ENCODE measurements at regions of chr1 and their contacts with region 1.

Region 1: GRCh38 chr1:9234223-9235095 is at the start of gene H6PD:
- DNase-seq: peak; percentile 74
- H3K4me3 ChIP-seq: peak within 1 kb of the TSS; percentile 58 to 82 (median 66)
- H3K27ac ChIP-seq: peak within 1 kb of the TSS; percentile 75
- H3K4me1 ChIP-seq: peaks cover 21% of the 10 kb centered on the region
- H3K27me3 ChIP-seq: no peaks in the 10 kb centered on the region
- CTCF ChIP-seq: peak; percentile 68 to 76
- POLR2A ChIP-seq: peak; percentile 96
- total RNA-seq, gene H6PD: 29.0 and 40.1 TPM in 2 replicates

Region 2: GRCh38 chr1:9128520-9129265 is 105.8 kb before region 1 on chr1 and contains the start of gene GPR157:
- CTCF ChIA-PET with region 1: interaction called, 4 read pairs
- POLR2A ChIA-PET with region 1: interaction called, 3 read pairs
- dilution Hi-C with region 1: no loop called
- intact Hi-C with region 1: loop called (anchors 5 kb)
- DNase-seq: peak; percentile 70
- H3K4me3 ChIP-seq: peak within 1 kb of the TSS; percentile 34 to 49 (median 36)
- H3K27ac ChIP-seq: no peak within 1 kb of the TSS
- H3K4me1 ChIP-seq: peaks cover 8% of the 10 kb centered on the region
- H3K27me3 ChIP-seq: no peaks in the 10 kb centered on the region
- CTCF ChIP-seq: peak in 1 of 2 donors; percentile 19
- POLR2A ChIP-seq: peak; percentile 78
- total RNA-seq, gene GPR157: 5.2 and 6.5 TPM in 2 replicates

Region 3: DNA sequence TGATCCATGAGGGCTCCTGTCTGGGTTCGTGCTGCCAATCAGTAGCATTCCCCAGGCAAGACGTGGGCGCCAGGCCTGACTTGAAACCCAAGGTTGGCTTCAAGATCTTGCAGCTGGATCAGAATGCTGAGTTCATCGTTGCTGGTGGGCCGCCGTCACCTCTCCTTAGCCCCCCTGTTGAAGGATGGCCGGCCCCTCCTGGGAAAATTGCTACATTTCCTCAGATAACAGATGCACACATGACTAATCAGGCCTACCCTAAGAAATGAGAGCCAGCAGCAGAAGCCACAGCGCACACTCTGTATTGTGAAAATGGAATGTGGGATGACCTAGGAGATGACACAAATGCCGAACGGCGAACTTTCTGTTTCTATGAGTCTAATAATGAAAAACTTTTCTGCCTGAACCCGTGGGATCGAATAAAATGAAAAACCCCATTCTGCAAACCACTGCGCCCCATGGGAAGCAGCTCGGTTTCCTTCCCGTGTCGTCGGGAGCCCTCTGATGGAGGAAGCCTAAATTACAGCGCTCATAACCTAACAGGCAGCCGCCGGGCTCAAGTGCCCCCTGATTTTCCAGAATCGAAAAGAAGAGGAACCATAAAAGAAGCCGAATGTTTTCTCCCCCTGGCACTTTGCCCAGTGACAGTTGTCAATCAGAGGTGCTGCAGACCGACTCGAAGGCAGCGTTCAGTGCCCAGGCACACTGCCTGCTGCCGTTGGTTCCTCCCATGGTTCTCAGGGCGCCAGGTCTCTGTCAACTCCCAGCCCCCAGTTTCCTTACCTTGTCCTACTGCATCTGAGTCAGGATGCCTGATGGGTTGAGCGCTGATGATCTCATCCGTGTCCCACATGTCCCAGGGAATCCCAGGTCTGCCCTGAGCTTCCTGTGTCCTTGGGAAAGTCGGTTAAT is 38.1 kb before region 1 on chr1:
- CTCF ChIA-PET with region 1: interaction called, 29 read pairs
- POLR2A ChIA-PET with region 1: no interaction called
- dilution Hi-C with region 1: no loop called
- intact Hi-C with region 1: loop called (anchors 5 kb)
- DNase-seq: peak; percentile 66
- H3K4me3 ChIP-seq: no peak overlapping the region
- H3K27ac ChIP-seq: no peak overlapping the region
- H3K4me1 ChIP-seq: peaks cover 14% of the 10 kb centered on the region
- H3K27me3 ChIP-seq: peaks cover 2 to 5% of the 10 kb centered on the region in 2 experiments
- CTCF ChIP-seq: peak; percentile 74 to 75
- POLR2A ChIP-seq: no peak

Region 4: DNA sequence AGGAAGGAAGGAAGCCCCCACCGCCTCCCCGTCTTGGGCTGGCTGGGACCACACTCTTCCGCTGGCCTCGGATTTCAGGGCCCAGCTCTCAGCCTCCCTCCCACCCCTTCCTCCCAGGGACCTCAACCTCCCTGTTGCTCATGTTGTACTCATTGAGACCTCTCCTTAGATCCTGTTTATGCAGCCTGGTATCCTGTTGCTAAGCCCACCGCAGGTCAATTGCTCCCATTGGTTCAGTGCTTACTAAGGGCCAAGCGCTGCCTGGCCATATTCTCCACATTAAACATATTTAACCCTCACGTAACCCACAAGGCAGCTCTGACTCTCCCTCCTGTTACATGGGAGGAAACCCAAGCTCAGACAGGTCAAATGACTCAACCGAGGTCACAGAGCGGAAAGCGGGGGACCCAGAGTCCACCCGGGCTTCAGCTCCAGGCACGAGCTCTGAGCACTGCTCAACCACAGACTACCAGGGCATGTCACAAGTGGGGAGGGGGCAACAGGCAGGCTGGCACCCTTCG is 23.1 kb before region 1 on chr1:
- CTCF ChIA-PET with region 1: interaction called, 13 read pairs
- POLR2A ChIA-PET with region 1: no interaction called
- dilution Hi-C with region 1: no loop called
- intact Hi-C with region 1: no loop called
- DNase-seq: peak; percentile 95
- H3K4me3 ChIP-seq: no peak overlapping the region
- H3K27ac ChIP-seq: peak overlapping the region; percentile 73
- H3K4me1 ChIP-seq: peaks cover 16% of the 10 kb centered on the region
- H3K27me3 ChIP-seq: peaks cover 0 to 2% of the 10 kb centered on the region in 2 experiments
- CTCF ChIP-seq: no peak
- POLR2A ChIP-seq: no peak

Region 5: DNA sequence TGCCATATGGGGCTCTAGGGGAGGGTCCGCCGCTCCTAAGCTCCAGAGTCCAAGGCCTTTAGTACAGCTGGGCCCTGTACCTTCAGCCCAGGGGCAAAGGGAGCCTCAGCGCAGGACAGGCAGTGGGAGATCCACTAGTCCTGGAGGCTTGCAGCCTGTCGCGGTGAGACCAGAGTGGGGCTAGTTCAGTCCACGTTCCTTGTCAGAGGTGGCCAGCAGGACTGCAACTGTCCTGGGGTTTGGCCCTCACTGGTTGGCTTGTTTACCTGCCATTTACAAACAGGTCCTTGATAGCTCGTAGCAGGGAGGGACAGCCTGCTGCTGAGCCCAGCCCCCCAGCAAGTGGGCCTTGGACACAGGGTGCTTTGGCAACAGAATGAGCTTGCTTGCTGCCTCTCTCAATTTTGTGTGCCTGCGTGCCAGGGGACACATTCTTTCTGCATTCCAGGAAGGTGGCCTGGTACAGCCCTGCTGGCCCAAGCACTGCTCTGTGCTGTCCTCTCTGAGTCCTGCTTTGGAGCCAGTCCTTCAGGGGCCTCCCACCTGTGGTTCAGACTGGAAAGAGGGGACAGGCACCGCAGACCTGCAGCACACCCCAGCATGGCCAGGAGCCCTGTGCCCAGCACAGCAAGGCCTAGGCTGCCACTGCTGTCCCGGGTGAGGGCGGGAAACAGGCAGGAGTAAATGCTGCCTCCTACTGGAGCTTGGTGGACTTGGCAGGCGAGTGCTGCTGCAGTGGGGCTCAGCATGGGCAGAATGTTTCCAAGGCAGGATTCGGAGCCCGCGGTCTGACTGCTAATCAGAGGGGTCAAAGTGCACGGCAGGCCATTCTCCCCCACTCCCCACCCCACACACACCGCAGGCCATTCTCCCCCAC is 15.3 kb after region 1 on chr1:
- CTCF ChIA-PET with region 1: interaction called, 27 read pairs
- POLR2A ChIA-PET with region 1: no interaction called
- dilution Hi-C with region 1: no loop called
- intact Hi-C with region 1: no loop called
- DNase-seq: peak; percentile 41
- H3K4me3 ChIP-seq: no peak overlapping the region
- H3K27ac ChIP-seq: no peak overlapping the region
- H3K4me1 ChIP-seq: no peaks in the 10 kb centered on the region
- H3K27me3 ChIP-seq: no peaks in the 10 kb centered on the region
- CTCF ChIP-seq: peak; percentile 61 to 77
- POLR2A ChIP-seq: no peak

Region 6: DNA sequence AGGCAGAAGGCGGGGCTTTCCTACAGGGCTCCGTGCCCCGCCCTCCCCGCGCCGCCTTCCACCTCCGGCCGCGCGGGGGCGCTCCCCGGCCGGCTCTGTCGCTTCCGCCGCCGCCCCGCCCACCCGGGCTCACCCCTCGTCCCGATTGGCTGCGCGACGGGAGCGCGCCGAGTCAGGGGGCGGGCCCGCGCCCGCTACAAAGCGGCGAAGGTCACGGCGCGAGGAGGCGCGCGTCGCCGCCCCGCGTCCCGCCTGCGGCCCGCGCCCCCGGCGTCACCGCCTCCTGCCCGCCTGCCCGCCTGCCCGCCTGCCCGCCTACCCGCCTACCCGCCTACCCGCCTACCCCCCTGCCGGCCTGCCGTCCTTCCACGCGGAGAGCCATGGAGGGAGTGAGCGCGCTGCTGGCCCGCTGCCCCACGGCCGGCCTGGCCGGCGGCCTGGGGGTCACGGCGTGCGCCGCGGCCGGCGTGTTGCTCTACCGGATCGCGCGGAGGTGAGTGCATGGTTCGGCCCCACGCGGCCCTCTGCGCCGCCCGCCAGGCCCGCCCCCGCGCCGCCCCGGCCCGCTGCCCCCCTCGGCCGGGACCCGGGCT is 354.2 kb after region 1 on chr1 and contains the start of gene TMEM201:
- CTCF ChIA-PET with region 1: interaction called, 3 read pairs
- POLR2A ChIA-PET with region 1: no interaction called
- dilution Hi-C with region 1: no loop called
- intact Hi-C with region 1: loop called (anchors 1 kb)
- DNase-seq: peak; percentile 92
- H3K4me3 ChIP-seq: peak within 1 kb of the TSS; percentile 54 to 75 (median 71)
- H3K27ac ChIP-seq: peak within 1 kb of the TSS; percentile 3
- H3K4me1 ChIP-seq: peaks cover 20% of the 10 kb centered on the region
- H3K27me3 ChIP-seq: no peaks in the 10 kb centered on the region
- CTCF ChIP-seq: peak; percentile 70 to 76
- POLR2A ChIP-seq: no peak
- total RNA-seq, gene TMEM201: 21.0 and 24.8 TPM in 2 replicates